ENCODE measurements at regions of chr2 and their contacts with region 1.

Region 1: GRCh38 chr2:8681786-8682692 is at the start of gene ID2:
- DNase-seq: peak; percentile 99 to 100
- H3K4me3 ChIP-seq: peak within 1 kb of the TSS; percentile 75
- H3K4me3 Mint-ChIP-seq: peak within 1 kb of the TSS; percentile 81
- H3K27ac Mint-ChIP-seq: peak within 1 kb of the TSS; percentile 85
- H3K4me1 ChIP-seq: peaks cover 7% of the 10 kb centered on the region
- H3K4me1 Mint-ChIP-seq: peaks cover 6% of the 10 kb centered on the region
- H3K27me3 ChIP-seq: no peaks in the 10 kb centered on the region
- H3K27me3 Mint-ChIP-seq: no peaks in the 10 kb centered on the region
- CTCF ChIP-seq: no peak
- total RNA-seq, gene ID2: 90.9 and 101 TPM in 2 replicates

Region 2: GRCh38 chr2:8285081-8285480 is 397.0 kb before region 1 on chr2:
- CTCF ChIA-PET with region 1: no interaction called
- POLR2A ChIA-PET with region 1: interaction called, 3 read pairs
- intact Hi-C with region 1: loop called (anchors 10 kb)
- DNase-seq: peak; percentile 24 to 64
- H3K4me3 ChIP-seq: no peak overlapping the region
- H3K4me3 Mint-ChIP-seq: no peak overlapping the region
- H3K27ac Mint-ChIP-seq: no peak overlapping the region
- H3K4me1 ChIP-seq: 0 out of 2 replicates have a peak, but pooled peaks cover 3% of the 10 kb centered on the region
- H3K4me1 Mint-ChIP-seq: peaks cover 7% of the 10 kb centered on the region
- H3K27me3 ChIP-seq: no peaks in the 10 kb centered on the region
- H3K27me3 Mint-ChIP-seq: no peaks in the 10 kb centered on the region
- CTCF ChIP-seq: no peak

Region 3: GRCh38 chr2:8456151-8456845 is 225.7 kb before region 1 on chr2:
- CTCF ChIA-PET with region 1: no interaction called
- POLR2A ChIA-PET with region 1: no interaction called
- intact Hi-C with region 1: loop called (anchors 2 kb)
- DNase-seq: no peak
- H3K4me3 ChIP-seq: no peak overlapping the region; the same call in 1 of the 2 replicates
- H3K4me3 Mint-ChIP-seq: peak overlapping the region; percentile 52
- H3K27ac Mint-ChIP-seq: no peak overlapping the region
- H3K4me1 ChIP-seq: peaks cover 19% of the 10 kb centered on the region
- H3K4me1 Mint-ChIP-seq: peaks cover 22% of the 10 kb centered on the region
- H3K27me3 ChIP-seq: no peaks in the 10 kb centered on the region; the same call in 1 of the 2 replicates
- H3K27me3 Mint-ChIP-seq: no peaks in the 10 kb centered on the region
- CTCF ChIP-seq: no peak

Region 4: DNA sequence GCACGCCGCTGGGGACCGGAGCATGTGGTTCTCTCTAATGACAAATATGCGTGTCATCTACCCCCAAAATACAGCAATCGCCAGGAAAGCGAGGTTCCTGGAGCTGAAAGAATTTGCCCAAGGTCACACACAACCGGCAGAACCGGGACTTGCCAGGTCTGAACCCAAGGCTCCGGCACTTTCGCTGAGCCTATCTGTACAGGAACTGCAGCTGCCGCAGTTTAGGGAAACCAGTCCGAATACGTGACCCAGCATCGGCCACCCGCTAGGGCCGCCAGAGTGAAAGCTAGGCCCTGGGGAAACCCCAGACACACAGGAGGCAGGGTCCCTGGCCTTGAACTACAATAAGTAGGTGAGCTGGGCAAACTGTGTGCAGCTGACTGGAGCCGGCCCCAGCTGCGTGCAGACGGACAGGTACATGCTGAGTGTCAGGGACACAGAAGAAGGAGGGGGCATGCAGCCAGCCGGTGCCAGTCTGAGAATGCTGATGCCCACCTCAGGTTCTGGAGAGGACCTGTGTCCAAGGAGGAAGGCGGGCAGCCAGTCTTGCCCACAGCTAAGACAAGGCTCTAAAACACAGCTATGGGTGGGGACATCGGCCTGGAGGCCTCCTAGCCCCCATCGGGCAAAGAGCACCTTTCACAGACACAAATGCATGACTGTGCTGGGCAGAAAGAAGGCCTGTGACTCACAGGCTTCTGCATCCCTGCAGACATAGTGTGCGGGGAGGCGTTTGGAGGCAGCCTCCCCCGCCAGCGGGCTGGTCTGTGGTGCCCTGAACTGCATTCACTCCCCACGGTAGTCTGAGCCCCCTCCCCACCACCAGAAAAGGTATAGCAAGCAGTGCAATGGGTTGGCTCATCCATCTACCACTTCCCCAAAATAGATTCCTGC is 107.6 kb before region 1 on chr2:
- CTCF ChIA-PET with region 1: no interaction called
- POLR2A ChIA-PET with region 1: interaction called, 34 read pairs
- intact Hi-C with region 1: loop called (anchors 1 kb)
- DNase-seq: peak in 1 of 2 experiments; percentile 65
- H3K4me3 ChIP-seq: no peak overlapping the region
- H3K4me3 Mint-ChIP-seq: peak overlapping the region; percentile 49
- H3K27ac Mint-ChIP-seq: peak overlapping the region; percentile 96
- H3K4me1 ChIP-seq: peaks cover 40% of the 10 kb centered on the region
- H3K4me1 Mint-ChIP-seq: peaks cover 45% of the 10 kb centered on the region
- H3K27me3 ChIP-seq: no peaks in the 10 kb centered on the region
- H3K27me3 Mint-ChIP-seq: no peaks in the 10 kb centered on the region
- CTCF ChIP-seq: no peak

Region 5: GRCh38 chr2:8628230-8629209 is 53.5 kb before region 1 on chr2:
- CTCF ChIA-PET with region 1: interaction called, 23 read pairs
- POLR2A ChIA-PET with region 1: interaction called, 50 read pairs
- intact Hi-C with region 1: loop called (anchors 1 kb)
- DNase-seq: no peak
- H3K4me3 ChIP-seq: no peak overlapping the region
- H3K4me3 Mint-ChIP-seq: peak overlapping the region; percentile 51
- H3K27ac Mint-ChIP-seq: peak overlapping the region; percentile 65
- H3K4me1 ChIP-seq: peaks cover 90% of the 10 kb centered on the region
- H3K4me1 Mint-ChIP-seq: peaks cover 31% of the 10 kb centered on the region
- H3K27me3 ChIP-seq: no peaks in the 10 kb centered on the region
- H3K27me3 Mint-ChIP-seq: no peaks in the 10 kb centered on the region
- CTCF ChIP-seq: peak in 1 of 2 experiments; percentile 4

Region 6: DNA sequence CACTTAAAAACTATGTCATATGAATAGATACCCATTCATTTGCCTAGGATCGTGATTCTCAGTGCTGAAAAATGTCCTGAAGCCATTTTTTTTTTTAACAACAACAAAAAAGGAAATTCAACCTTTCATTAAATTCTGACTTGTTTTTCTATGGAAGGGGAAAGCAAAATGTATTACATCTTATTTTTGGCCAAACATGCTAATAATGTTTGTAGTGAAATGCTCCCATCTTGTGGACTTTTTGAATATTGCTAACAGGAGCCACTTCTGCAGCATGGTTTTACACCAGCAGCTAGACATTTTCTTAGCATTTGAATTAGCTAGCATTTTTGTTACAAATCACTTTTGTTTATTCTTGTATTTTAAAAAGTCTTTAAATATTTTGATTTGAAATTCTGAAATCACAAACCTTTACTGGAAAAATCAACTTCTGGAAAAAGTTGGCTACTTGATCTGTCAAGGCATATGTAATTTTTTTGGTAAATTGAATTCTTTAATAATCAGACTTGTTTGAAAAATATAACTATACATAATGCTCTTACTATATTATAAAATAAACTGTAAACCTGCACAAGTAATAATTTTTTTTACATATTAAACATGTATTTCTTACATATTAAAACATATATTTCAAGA is 79.6 kb after region 1 on chr2:
- CTCF ChIA-PET with region 1: no interaction called
- POLR2A ChIA-PET with region 1: interaction called, 3 read pairs
- intact Hi-C with region 1: loop called (anchors 1 kb)
- DNase-seq: peak in 1 of 2 experiments; percentile 34
- H3K4me3 ChIP-seq: no peak overlapping the region
- H3K4me3 Mint-ChIP-seq: no peak overlapping the region
- H3K27ac Mint-ChIP-seq: no peak overlapping the region
- H3K4me1 ChIP-seq: no peaks in the 10 kb centered on the region
- H3K4me1 Mint-ChIP-seq: no peaks in the 10 kb centered on the region
- H3K27me3 ChIP-seq: no peaks in the 10 kb centered on the region
- H3K27me3 Mint-ChIP-seq: no peaks in the 10 kb centered on the region
- CTCF ChIP-seq: peak; percentile 62 to 64

Measured in Caco-2 (cell line).